ENCODE measurements at regions of chr12 and their contacts with region 1.

Region 1: DNA sequence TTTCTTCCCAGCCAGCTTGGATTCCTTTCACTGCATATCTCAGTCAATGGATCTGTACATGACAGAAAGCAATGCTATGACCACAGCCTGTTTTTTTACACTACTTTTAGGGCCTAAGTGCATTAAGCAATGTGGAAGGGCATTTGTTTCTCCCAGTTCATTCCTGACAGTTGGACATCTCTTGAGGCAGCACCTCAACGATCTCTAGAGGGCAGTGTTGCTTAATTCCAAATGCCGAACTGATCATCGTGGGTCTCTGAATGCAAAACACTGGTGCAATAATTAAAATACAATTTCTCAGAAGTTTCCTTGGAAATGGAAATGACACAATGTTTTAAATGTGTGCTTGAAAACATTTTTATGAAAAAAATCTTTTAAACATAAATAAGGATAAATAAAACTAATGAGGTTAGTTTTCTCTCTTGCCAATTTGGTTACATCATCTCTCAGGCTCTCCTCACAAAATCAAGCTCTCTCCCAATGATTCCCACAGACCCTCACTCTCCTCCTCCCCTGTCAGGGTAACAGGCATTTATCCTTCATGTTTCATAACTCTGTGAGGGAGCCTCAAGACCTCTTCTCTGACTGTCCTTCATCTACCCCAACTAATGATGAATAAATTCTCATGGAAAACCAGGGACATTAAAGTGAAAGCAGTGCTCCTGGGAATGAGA is 192.4 kb upstream of the SLC16A7 start:
- ATAC-seq: peak; percentile 65 to 100 (median 86)
- H3K4me3 ChIP-seq: no peak overlapping the region
- H3K27ac ChIP-seq: no peak overlapping the region
- H3K4me1 ChIP-seq: peaks cover 0 to 3% of the 10 kb centered on the region in 2 donors

Region 2: DNA sequence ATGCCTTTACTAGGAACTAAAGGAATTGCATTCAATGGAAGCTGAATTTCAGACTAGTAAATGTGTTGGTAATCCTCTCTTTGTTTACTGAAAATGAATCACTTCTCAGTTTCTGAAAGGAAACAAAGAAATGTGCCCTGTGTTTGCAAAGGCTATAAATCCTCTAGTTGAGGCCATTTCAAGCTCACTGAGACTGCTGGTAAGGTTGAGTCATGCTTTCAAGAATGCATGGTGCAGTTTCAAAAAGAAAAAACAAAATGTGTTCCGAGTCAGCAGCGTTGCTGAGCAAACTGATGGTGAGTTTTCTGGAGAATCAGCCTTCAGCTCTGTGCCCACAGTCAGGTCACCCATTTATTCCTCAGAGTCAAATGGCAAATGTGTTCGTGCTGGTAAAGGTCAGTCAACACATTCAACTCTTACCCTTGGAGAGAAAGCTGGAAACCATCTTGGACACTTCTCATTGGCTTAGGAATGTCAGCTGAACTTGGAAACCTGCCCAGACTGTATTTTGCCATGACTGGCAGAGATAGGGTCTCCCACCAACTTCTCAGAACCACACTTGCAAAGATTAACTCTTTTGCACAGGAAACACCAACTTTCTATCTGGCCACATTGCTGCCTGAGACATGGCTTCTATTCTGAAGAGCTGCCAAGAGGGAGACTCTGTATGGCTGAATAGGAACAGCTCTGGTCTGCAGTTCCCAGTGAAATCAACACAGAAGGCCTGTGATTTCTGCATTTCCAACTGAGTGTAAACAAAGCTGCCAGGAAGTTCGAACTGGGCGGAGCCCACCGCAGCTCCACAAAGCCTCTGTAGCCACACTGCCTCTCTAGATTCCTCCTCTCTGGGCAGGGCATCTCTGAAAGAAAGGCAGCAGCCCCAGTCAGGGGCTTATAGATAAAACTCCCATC is 977.7 kb before region 1 on chr12:
- in situ Hi-C with region 1: no loop called
- ATAC-seq: peak; percentile 82 to 99 (median 88)
- H3K4me3 ChIP-seq: no peak overlapping the region
- H3K27ac ChIP-seq: peak overlapping the region; percentile 79 to 89
- H3K4me1 ChIP-seq: peaks cover 33 to 39% of the 10 kb centered on the region in 2 donors

Region 3: GRCh38 chr12:59250766-59251165 is 152.6 kb before region 1 on chr12:
- in situ Hi-C with region 1: no loop called
- ATAC-seq: no peak
- H3K4me3 ChIP-seq: no peak overlapping the region
- H3K27ac ChIP-seq: no peak overlapping the region
- H3K4me1 ChIP-seq: no peaks in the 10 kb centered on the region

Region 4: DNA sequence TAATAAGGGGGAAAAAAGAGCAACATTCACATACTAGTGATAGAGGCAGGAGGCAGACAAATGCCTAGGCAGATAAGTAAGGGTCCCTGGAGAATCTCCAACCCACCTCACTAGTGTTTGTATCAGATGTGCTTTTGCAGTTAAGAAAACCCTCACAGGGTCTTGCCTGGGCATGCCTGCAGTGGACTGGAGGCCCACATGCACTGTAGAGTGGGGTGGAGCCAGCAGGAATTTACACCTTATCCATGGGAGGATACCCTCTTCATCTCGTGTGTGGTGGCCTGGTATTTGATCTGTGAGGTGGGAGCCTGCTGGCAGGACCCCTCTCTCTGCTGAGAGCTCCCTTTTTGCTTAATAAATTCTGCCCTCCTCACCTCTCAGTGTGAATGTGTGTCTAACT is 45.6 kb before region 1 on chr12:
- in situ Hi-C with region 1: no loop called
- ATAC-seq: peak in 3 of 8 experiments; percentile 43 to 82 (median 52)
- H3K4me3 ChIP-seq: no peak overlapping the region
- H3K27ac ChIP-seq: no peak overlapping the region
- H3K4me1 ChIP-seq: no peaks in the 10 kb centered on the region

Region 5: GRCh38 chr12:59595883-59596540 is 192.6 kb after region 1 on chr12 and contains the start of gene SLC16A7:
- in situ Hi-C with region 1: loop called in 1 of 9 experiments (anchors 25 kb)
- ATAC-seq: peak; percentile 58 to 87 (median 82)
- H3K4me3 ChIP-seq: peak within 1 kb of the TSS; percentile 41 to 61 (median 51)
- H3K27ac ChIP-seq: peak within 1 kb of the TSS; percentile 91 to 92
- H3K4me1 ChIP-seq: peaks cover 0 to 10% of the 10 kb centered on the region in 2 donors
- total RNA-seq, gene SLC16A7: 2.5 to 137 (median 6.4) TPM

Region 6: DNA sequence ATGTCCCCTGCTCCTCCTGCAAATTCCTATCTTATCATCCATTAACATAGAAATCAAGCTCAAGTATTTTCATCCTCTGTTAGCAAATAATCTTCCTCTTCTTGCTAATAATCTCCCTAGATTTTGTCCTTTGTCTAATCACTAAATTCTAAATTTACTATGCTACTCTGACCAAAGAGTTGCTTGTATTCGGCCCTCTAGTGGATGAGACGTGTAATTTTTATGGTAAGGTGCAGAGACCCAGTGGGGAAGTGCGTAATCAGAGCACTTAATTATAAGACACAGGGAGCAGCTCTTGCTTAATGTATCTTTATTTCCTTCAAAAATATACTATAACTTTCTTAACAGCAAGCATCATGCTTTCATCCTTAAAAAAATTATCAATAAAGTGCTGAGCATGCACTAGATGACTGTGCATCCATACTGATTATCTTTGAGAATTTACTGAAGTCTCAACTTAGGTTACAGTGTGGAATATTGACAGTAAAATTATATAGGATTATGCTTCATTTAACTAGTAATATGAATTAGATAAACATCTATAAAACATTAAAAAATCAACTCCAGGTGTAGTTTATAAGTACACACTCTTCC is 405.0 kb after region 1 on chr12:
- in situ Hi-C with region 1: loop called in 1 of 9 experiments (anchors 25 kb)
- ATAC-seq: peak in 6 of 8 experiments; percentile 44 to 76 (median 70)
- H3K4me3 ChIP-seq: no peak overlapping the region
- H3K27ac ChIP-seq: no peak overlapping the region
- H3K4me1 ChIP-seq: no peaks in the 10 kb centered on the region

Measured in motor neuron (in vitro differentiated cells).